ENCODE measurements at regions of chr19 and their contacts with region 1.

Region 1: GRCh38 chr19:36378625-36379509 is at the start of gene ZFP14:
- DNase-seq: peak; percentile 93
- H3K4me3 ChIP-seq: peak within 1 kb of the TSS; percentile 71 to 95 (median 75)
- H3K27ac ChIP-seq: peak within 1 kb of the TSS; percentile 52
- H3K4me1 ChIP-seq: peaks cover 6% of the 10 kb centered on the region
- H3K27me3 ChIP-seq: no peaks in the 10 kb centered on the region
- CTCF ChIP-seq: peak in 1 of 2 donors; percentile 45
- total RNA-seq, gene ZFP14: 0.73 to 2.5 TPM

Region 2: GRCh38 chr19:36331353-36332228 is 47.3 kb before region 1 on chr19:
- CTCF ChIA-PET with region 1: no interaction called
- dilution Hi-C with region 1: no loop called
- in situ Hi-C with region 1: no loop called
- intact Hi-C with region 1: no loop called
- DNase-seq: peak; percentile 91
- H3K4me3 ChIP-seq: peak overlapping the region; percentile 57 to 68 (median 63)
- H3K27ac ChIP-seq: no peak overlapping the region
- H3K4me1 ChIP-seq: no peaks in the 10 kb centered on the region
- H3K27me3 ChIP-seq: no peaks in the 10 kb centered on the region
- CTCF ChIP-seq: no peak

Region 3: DNA sequence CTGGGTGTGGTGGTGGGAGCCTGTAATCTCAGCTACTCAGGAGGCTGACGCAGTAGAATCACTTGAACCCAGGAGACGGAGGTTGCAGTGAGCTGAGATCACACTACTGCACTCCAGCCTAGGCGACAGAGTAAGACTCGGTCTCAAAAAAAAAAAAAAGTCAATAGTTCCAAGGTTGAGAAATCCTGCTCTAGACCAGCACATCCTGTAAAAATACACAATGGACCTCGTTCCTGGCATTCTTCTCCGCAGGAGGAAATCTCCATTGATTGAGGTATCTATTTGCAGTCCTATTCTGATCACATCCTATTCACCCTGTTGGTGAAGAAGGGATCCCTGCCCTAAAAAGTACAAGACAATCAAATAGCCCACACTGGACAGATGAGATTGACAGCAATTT is 15.0 kb before region 1 on chr19:
- CTCF ChIA-PET with region 1: no interaction called
- dilution Hi-C with region 1: no loop called
- in situ Hi-C with region 1: no loop called
- intact Hi-C with region 1: no loop called
- DNase-seq: no peak
- H3K4me3 ChIP-seq: no peak overlapping the region
- H3K27ac ChIP-seq: no peak overlapping the region
- H3K4me1 ChIP-seq: no peaks in the 10 kb centered on the region
- H3K27me3 ChIP-seq: no peaks in the 10 kb centered on the region
- CTCF ChIP-seq: no peak

Region 4: GRCh38 chr19:36418287-36419001 is 39.6 kb after region 1 on chr19 and contains the start of gene ZFP82:
- CTCF ChIA-PET with region 1: no interaction called
- dilution Hi-C with region 1: no loop called
- in situ Hi-C with region 1: no loop called
- intact Hi-C with region 1: loop called (anchors 5 kb)
- DNase-seq: peak; percentile 42
- H3K4me3 ChIP-seq: peak within 1 kb of the TSS; percentile 62 to 71 (median 66)
- H3K27ac ChIP-seq: peak within 1 kb of the TSS; percentile 12
- H3K4me1 ChIP-seq: peaks cover 14% of the 10 kb centered on the region
- H3K27me3 ChIP-seq: no peaks in the 10 kb centered on the region
- CTCF ChIP-seq: no peak
- total RNA-seq, gene ZFP82: 2.5 to 6.2 TPM

Region 5: GRCh38 chr19:36573020-36573885 is 194.4 kb after region 1 on chr19 and contains the start of gene ZNF529:
- CTCF ChIA-PET with region 1: no interaction called
- dilution Hi-C with region 1: no loop called
- in situ Hi-C with region 1: no loop called
- intact Hi-C with region 1: loop called (anchors 5 kb)
- DNase-seq: peak; percentile 87
- H3K4me3 ChIP-seq: peak within 1 kb of the TSS; percentile 53 to 100 (median 84)
- H3K27ac ChIP-seq: peak within 1 kb of the TSS; percentile 70
- H3K4me1 ChIP-seq: peaks cover 6% of the 10 kb centered on the region
- H3K27me3 ChIP-seq: no peaks in the 10 kb centered on the region
- CTCF ChIP-seq: no peak
- total RNA-seq, gene ZNF529: 10.0 to 12.4 TPM

Region 6: GRCh38 chr19:36687214-36688056 is 308.6 kb after region 1 on chr19 and contains the start of gene ZNF567:
- CTCF ChIA-PET with region 1: no interaction called
- dilution Hi-C with region 1: no loop called
- in situ Hi-C with region 1: no loop called
- intact Hi-C with region 1: loop called (anchors 5 kb)
- DNase-seq: peak; percentile 96
- H3K4me3 ChIP-seq: peak within 1 kb of the TSS; percentile 75 to 92 (median 90)
- H3K27ac ChIP-seq: peak within 1 kb of the TSS; percentile 69
- H3K4me1 ChIP-seq: no peaks in the 10 kb centered on the region
- H3K27me3 ChIP-seq: no peaks in the 10 kb centered on the region
- CTCF ChIP-seq: peak in 1 of 2 donors; percentile 11
- total RNA-seq, gene ZNF567: 7.3 to 7.5 TPM

Region 7: GRCh38 chr19:37077934-37078725 is 699.3 kb after region 1 on chr19 and contains the start of gene ZNF420:
- CTCF ChIA-PET with region 1: no interaction called
- dilution Hi-C with region 1: no loop called
- in situ Hi-C with region 1: no loop called
- intact Hi-C with region 1: loop called (anchors 2 kb)
- DNase-seq: peak; percentile 94
- H3K4me3 ChIP-seq: peak within 1 kb of the TSS; percentile 74 to 91 (median 87)
- H3K27ac ChIP-seq: peak within 1 kb of the TSS; percentile 41
- H3K4me1 ChIP-seq: peaks cover 8% of the 10 kb centered on the region
- H3K27me3 ChIP-seq: no peaks in the 10 kb centered on the region
- CTCF ChIP-seq: no peak
- total RNA-seq, gene ZNF420: 4.1 to 9.0 TPM

Measured in mammary epithelial cell (primary cell).